ENCODE measurements at regions of chr16 and their contacts with region 1.

Region 1: DNA sequence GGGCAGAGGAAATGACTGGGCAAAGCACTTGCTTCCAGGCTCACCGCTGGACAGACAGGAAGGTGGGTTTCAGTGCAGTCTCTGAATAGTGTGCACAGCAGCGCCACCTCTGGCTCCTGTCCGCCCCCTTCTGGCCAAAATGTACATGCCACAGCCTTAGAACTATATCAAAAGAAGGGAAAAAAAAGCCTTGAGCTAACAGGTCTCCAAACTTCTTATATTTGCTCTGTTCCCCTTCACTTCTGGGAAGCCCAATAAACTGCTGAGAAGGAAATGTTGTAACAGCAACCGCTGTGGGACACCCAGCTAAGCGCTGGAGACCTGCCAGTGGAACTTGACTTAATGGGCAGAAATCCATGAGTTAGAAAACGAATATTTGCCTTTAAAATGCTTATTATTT is 17.5 kb downstream of the COG7 start:
- DNase-seq: peak; percentile 77
- ATAC-seq: peak; percentile 98
- H3K4me3 ChIP-seq: no peak overlapping the region
- H3K27ac ChIP-seq: no peak overlapping the region
- H3K4me1 ChIP-seq: no peaks in the 10 kb centered on the region
- H3K27me3 ChIP-seq: no peaks in the 10 kb centered on the region
- CTCF ChIP-seq: peak; percentile 90
- EP300 ChIP-seq: no peak
- POLR2A ChIP-seq: no peak
- RAD21 ChIP-seq: peak; percentile 72

Region 2: GRCh38 chr16:23081675-23082119 is 353.8 kb before region 1 on chr16:
- CTCF ChIA-PET with region 1: interaction called, 4 read pairs
- POLR2A ChIA-PET with region 1: no interaction called
- in situ Hi-C with region 1: no loop called
- intact Hi-C with region 1: loop called (anchors 10 kb)
- DNase-seq: no peak
- ATAC-seq: no peak; the same call in 2 of the 3 replicates
- H3K4me3 ChIP-seq: no peak overlapping the region
- H3K27ac ChIP-seq: no peak overlapping the region
- H3K4me1 ChIP-seq: no peaks in the 10 kb centered on the region
- H3K27me3 ChIP-seq: no peaks in the 10 kb centered on the region
- CTCF ChIP-seq: no peak
- EP300 ChIP-seq: no peak
- POLR2A ChIP-seq: no peak
- RAD21 ChIP-seq: no peak

Region 3: DNA sequence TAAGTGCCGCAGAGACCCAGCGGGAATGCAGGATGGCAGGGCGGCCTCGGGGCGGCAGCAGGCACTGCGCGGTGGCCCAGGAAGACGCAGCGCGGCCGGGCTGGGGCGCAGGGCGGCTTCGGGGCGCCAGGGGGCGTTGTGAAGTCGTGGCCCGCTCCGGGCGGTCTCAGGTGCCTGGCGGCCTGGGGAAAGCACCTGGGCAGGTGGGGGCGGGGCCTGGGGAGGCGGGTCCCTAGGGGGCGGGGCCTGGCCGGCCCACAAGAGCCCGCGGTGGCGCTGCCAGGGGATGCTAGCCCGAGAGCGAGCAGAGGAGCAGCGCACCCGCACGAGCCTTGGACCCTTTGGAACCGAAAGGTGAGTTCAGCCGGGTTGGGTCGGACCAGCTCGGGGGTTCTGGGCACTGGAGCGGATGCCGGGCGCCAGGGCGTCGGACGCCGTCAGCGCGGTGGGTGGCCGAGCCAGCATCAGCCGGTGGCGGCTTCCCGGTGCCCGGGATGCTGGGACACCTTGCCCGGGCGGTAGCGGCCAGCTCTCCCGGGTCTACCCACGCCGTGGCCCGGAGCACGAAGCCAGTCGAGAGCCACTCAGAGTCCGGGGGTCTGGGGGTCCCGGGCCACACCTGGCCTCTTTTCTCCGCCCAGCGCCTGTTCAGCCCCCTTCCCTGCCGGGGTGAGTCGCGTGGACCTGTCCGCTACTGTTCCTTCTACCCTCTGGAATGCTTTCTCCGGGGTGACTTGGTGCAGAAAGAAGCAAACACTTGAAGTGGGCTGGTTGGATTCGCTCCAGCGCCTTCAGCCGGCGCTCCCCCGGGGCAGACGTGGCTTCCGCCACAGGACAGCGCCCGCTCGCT is 252.8 kb before region 1 on chr16 and contains the start of gene SCNN1G:
- CTCF ChIA-PET with region 1: interaction called, 251 read pairs
- POLR2A ChIA-PET with region 1: no interaction called
- in situ Hi-C with region 1: loop called (anchors 5 kb)
- intact Hi-C with region 1: loop called (anchors 1 kb)
- DNase-seq: peak; percentile 62
- ATAC-seq: peak; percentile 99
- H3K4me3 ChIP-seq: peak within 1 kb of the TSS in 2 of 3 experiments; percentile 1 to 56; a peak in 2 of 6 replicates
- H3K27ac ChIP-seq: no peak within 1 kb of the TSS
- H3K4me1 ChIP-seq: peaks cover 8% of the 10 kb centered on the region
- H3K27me3 ChIP-seq: peaks cover 19 to 55% of the 10 kb centered on the region in 2 experiments
- CTCF ChIP-seq: peak; percentile 95
- EP300 ChIP-seq: no peak
- POLR2A ChIP-seq: no peak
- RAD21 ChIP-seq: peak; percentile 100
- total RNA-seq, gene SCNN1G: not detected in 2 replicates

Region 4: DNA sequence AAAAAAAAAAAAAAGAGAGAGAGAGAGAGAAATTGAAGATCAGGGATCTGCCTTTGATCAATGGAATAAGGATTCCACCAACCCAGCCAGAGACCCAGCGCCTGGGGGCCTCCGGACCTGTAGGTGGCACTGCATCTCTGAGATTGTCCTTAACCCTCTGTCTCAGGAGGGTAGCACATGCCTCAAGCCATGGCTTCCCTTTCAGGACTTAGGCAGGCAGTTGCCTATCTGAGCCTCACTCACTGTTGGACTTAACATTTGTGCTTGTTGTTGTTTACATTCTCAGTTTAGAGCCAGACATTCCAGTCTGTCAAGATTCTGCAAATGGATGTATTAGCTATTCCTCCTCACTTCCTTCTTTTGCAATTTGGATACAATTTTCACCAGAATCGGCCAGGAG is 138.5 kb before region 1 on chr16:
- CTCF ChIA-PET with region 1: no interaction called
- POLR2A ChIA-PET with region 1: no interaction called
- in situ Hi-C with region 1: no loop called
- intact Hi-C with region 1: loop called (anchors 10 kb)
- DNase-seq: peak; percentile 24
- ATAC-seq: peak; percentile 79
- H3K4me3 ChIP-seq: no peak overlapping the region
- H3K27ac ChIP-seq: no peak overlapping the region
- H3K4me1 ChIP-seq: peaks cover 32% of the 10 kb centered on the region
- H3K27me3 ChIP-seq: peaks cover 6 to 16% of the 10 kb centered on the region in 2 experiments; a peak in 3 of 5 replicates
- CTCF ChIP-seq: peak; percentile 61
- EP300 ChIP-seq: no peak
- POLR2A ChIP-seq: no peak
- RAD21 ChIP-seq: 0 out of 2 replicates have a peak, but pooled peaks have one; percentile 20

Region 5: GRCh38 chr16:23362460-23363317 is 72.8 kb before region 1 on chr16:
- CTCF ChIA-PET with region 1: no interaction called
- POLR2A ChIA-PET with region 1: no interaction called
- in situ Hi-C with region 1: no loop called
- intact Hi-C with region 1: no loop called
- DNase-seq: no peak
- ATAC-seq: peak; percentile 39
- H3K4me3 ChIP-seq: no peak overlapping the region
- H3K27ac ChIP-seq: no peak overlapping the region
- H3K4me1 ChIP-seq: no peaks in the 10 kb centered on the region
- H3K27me3 ChIP-seq: peaks cover 0 to 23% of the 10 kb centered on the region in 2 experiments; a peak in 3 of 5 replicates
- CTCF ChIP-seq: no peak
- EP300 ChIP-seq: no peak
- POLR2A ChIP-seq: no peak
- RAD21 ChIP-seq: no peak

Region 6: GRCh38 chr16:23452572-23453337 is 17.3 kb after region 1 on chr16 and contains the start of gene COG7:
- CTCF ChIA-PET with region 1: interaction called, 13 read pairs
- POLR2A ChIA-PET with region 1: no interaction called
- in situ Hi-C with region 1: no loop called
- intact Hi-C with region 1: no loop called
- DNase-seq: peak; percentile 87
- ATAC-seq: peak; percentile 94
- H3K4me3 ChIP-seq: peak within 1 kb of the TSS; percentile 85 to 100 (median 87)
- H3K27ac ChIP-seq: peak within 1 kb of the TSS; percentile 90
- H3K4me1 ChIP-seq: peaks cover 35% of the 10 kb centered on the region
- H3K27me3 ChIP-seq: no peaks in the 10 kb centered on the region; a peak in 1 of 5 replicates
- CTCF ChIP-seq: peak; percentile 27
- EP300 ChIP-seq: peak in 1 of 2 experiments; percentile 59; a peak in 1 of 4 replicates
- POLR2A ChIP-seq: peak; percentile 89 to 98
- RAD21 ChIP-seq: peak; percentile 57; the same call in 1 of the 2 replicates
- total RNA-seq, gene COG7: 12.6 and 15.4 TPM in 2 replicates

Region 7: DNA sequence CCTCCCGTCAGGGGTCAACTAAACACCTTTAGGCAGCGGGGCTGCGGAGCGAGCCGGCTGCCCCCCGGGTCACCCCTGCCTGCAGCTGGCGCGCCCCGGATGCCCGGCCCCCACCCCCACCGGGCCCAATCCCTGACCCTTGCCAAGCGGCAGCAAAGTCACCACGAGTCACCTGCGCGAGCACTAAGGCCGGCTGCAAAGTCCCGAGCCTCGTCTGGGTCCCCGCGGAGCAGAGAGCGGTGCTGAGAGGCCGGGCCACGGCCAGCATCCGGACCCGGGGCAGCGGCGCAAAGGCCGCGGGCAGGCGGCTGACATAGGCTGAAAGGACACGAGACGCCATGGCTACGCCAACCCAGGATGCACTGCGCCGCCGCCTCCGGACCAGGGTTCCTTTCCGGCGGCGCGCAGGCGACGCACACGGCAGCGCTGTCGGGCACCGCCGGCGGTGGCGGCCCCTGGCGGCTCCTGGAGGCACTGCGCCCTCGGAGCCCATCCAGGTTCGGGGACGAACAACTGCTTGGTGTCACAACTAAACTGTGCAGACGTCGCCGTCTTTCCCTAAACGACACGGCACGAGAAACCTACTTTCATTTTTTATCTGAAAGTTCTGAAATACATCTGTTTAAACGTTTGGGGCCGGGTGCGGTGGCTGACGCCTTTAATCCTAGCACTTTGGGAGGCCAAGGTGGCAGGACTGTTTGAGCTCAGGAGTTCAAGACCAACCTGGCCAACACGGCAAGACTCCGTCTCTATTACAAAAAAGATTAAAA is 160.6 kb after region 1 on chr16 and contains the start of gene NDUFAB1:
- CTCF ChIA-PET with region 1: interaction called, 10 read pairs
- POLR2A ChIA-PET with region 1: no interaction called
- in situ Hi-C with region 1: no loop called
- intact Hi-C with region 1: no loop called
- DNase-seq: peak; percentile 91
- ATAC-seq: peak; percentile 96
- H3K4me3 ChIP-seq: peak within 1 kb of the TSS; percentile 72 to 98 (median 97)
- H3K27ac ChIP-seq: peak within 1 kb of the TSS; percentile 80
- H3K4me1 ChIP-seq: peaks cover 31% of the 10 kb centered on the region
- H3K27me3 ChIP-seq: peaks cover 0 to 5% of the 10 kb centered on the region in 2 experiments; a peak in 1 of 5 replicates
- CTCF ChIP-seq: peak; percentile 96
- EP300 ChIP-seq: peak in 1 of 2 experiments; percentile 58; a peak in 1 of 4 replicates
- POLR2A ChIP-seq: peak; percentile 93 to 97
- RAD21 ChIP-seq: peak; percentile 87
- total RNA-seq, gene NDUFAB1: 601 and 760 TPM in 2 replicates

Measured in HepG2 (cell line).